Heart right ventricle (tissue), 16 donors: ENCODE measurements at regions of chr22 and their contacts with region 1.

Region 1: DNA sequence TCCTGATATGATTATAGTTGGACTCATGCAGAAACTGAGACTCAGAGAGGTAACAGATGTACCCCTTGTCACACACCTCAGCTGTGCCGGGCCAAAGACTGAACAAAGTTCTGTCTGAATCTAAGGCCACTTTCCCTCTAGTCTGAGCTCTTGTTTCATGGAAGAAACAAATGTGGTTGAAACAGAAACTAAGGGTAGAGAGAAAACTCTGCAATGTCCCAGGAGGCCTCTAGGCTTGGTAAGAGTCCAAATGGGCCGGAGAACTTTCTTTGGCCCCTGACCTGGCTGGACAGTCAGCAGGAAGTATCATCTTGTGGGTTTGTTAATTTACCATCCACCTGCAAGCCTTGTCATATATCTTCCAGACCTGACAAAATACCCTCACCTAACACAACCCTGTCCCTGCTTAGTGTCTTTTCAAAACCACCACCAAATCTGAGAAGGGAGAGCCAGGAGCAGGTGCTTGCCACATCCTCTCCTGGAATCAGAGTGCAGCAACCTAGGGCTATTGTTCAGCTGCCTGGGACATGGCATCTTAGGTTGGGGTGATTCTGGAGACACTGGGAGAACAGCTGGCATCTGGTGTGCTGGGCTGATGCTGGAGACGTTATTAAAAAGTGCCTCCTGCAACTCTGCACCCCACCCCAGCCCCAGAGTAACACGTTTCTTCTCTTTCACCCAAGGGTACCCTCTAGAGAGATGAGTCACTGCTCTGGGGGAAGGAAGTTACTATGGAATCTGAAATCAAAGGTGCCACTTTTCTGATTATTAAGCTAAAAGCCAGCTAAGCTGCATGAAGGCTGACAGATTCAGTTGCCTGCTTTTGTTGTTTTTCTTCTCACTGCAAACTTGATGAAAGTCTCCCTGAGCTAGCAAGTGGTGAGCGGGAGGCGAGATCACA is 126.3 kb upstream of the TIMP3 start:
- DNase-seq: peak in 1 of 2 donors; percentile 40
- ATAC-seq: peak in 6 of 8 donors; percentile 33 to 67 (median 48)
- H3K4me3 ChIP-seq: no peak overlapping the region
- H3K27ac ChIP-seq: no peak overlapping the region
- H3K4me1 ChIP-seq: peaks cover 0 to 17% (median 11%) of the 10 kb centered on the region in 9 donors
- H3K27me3 ChIP-seq: peaks cover 0 to 7% (median 0%) of the 10 kb centered on the region in 7 donors
- CTCF ChIP-seq: peak in 3 of 9 donors; percentile 12 to 17 (median 16)

Region 2: GRCh38 chr22:32764330-32765131 is 89.4 kb after region 1 on chr22:
- intact Hi-C with region 1: loop called in 1 of 10 experiments (anchors 10 kb)
- DNase-seq: peak; percentile 47 to 65
- ATAC-seq: peak; percentile 50 to 83 (median 70)
- H3K4me3 ChIP-seq: no peak overlapping the region
- H3K27ac ChIP-seq: peak overlapping the region; percentile 50 to 88 (median 75)
- H3K4me1 ChIP-seq: peaks cover 14 to 50% (median 46%) of the 10 kb centered on the region in 9 donors
- H3K27me3 ChIP-seq: peaks cover 0 to 13% (median 0%) of the 10 kb centered on the region in 7 donors
- CTCF ChIP-seq: no peak